ENCODE measurements at regions of chr9 and their contacts with region 1.

Region 1: DNA sequence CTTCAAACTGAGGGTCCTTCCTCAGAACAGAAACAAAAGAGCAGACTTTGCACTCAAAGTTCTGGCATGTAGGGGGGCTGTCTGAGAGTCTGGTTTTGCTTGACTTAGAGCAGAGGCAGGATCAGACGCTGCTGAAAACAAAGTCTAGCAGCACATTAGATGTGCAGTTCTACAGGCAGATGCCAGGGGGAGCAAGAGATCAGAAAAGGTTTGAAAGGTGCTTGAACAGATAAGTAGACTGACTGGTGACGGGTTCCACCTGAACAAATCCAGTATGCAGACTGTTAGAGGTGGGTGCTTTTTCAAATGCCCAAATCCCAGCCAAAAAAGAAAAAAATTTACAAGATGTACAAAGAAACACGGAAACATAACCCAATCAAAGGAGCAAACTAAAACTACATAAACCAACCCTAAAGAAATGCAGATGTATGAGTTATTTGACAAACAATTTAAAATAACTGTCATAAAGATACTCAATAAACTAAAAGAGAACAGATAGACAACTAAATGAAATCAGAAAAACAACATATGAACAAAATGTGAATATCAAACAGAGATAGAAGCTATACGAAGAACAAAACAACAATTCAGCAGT is 194.7 kb upstream of the FREM1 start:
- DNase-seq: peak; percentile 57
- H3K4me3 Mint-ChIP-seq: no peak overlapping the region
- H3K27ac Mint-ChIP-seq: no peak overlapping the region
- H3K4me1 Mint-ChIP-seq: peaks cover 6% of the 10 kb centered on the region
- H3K27me3 Mint-ChIP-seq: peaks cover 43% of the 10 kb centered on the region
- CTCF ChIP-seq: peak; percentile 82

Region 2: GRCh38 chr9:14341437-14342122 is 763.3 kb before region 1 on chr9:
- CTCF ChIA-PET with region 1: no interaction called
- POLR2A ChIA-PET with region 1: no interaction called
- intact Hi-C with region 1: no loop called
- DNase-seq: no peak
- H3K4me3 Mint-ChIP-seq: no peak overlapping the region
- H3K27ac Mint-ChIP-seq: no peak overlapping the region
- H3K4me1 Mint-ChIP-seq: no peaks in the 10 kb centered on the region
- H3K27me3 Mint-ChIP-seq: no peaks in the 10 kb centered on the region
- CTCF ChIP-seq: no peak

Region 3: DNA sequence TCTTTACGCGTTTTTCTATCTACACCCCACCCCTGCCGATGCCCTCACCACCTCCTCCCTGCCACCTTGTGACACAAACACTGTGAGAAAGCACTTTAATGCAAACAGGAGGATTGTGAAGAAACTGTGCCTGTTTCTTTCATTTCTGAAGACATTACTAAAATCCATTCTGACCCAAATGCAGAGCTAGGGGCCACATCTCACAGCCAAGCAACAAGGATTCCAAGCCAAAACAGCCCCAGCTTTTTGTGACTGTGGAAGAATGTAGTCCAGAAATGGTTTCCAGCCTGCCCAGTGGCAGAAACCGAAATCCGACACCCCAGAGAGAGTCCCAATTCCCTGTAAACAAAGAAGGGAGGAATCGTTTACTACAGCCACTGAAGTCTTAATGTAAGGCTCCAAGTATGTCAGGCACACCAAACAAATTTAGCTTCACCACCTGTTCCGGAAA is 11.2 kb after region 1 on chr9:
- CTCF ChIA-PET with region 1: interaction called, 19 read pairs
- POLR2A ChIA-PET with region 1: interaction called, 3 read pairs
- intact Hi-C with region 1: no loop called
- DNase-seq: no peak
- H3K4me3 Mint-ChIP-seq: no peak overlapping the region
- H3K27ac Mint-ChIP-seq: no peak overlapping the region
- H3K4me1 Mint-ChIP-seq: no peaks in the 10 kb centered on the region
- H3K27me3 Mint-ChIP-seq: peaks cover 67% of the 10 kb centered on the region
- CTCF ChIP-seq: no peak

Region 4: DNA sequence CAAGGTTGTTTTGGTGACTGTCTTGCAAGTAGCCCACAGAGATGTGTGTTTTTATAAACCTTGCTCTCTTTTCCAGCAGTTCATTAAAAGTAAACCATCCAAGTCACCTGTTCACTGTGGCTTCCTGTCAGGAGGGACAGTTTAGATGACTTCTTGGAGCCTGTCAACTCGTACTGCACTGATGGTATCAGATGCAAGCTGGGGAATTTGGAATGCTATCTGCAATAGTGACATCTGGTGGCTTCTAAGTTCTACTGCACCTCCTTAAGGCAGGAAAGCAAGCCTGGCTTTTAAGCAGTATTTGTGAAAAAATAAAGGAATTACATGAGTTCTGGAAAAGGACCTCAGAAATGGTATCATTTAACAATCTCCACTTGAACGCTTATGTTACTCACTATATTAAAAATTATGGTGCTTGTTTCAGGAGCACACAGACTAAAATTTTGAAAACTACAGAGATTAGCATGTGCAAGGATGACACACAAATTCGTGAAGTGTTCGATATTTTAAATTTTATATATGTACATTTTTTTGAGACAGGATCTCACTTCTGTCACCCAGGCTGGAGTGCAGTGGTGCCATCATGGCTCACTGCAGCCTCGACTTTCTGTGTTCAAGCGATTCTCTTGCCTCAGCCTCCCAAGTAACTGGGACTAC is 38.1 kb after region 1 on chr9:
- CTCF ChIA-PET with region 1: interaction called, 12 read pairs
- POLR2A ChIA-PET with region 1: interaction called, 3 read pairs
- intact Hi-C with region 1: no loop called
- DNase-seq: peak; percentile 59
- H3K4me3 Mint-ChIP-seq: no peak overlapping the region
- H3K27ac Mint-ChIP-seq: no peak overlapping the region
- H3K4me1 Mint-ChIP-seq: peaks cover 15% of the 10 kb centered on the region
- H3K27me3 Mint-ChIP-seq: no peaks in the 10 kb centered on the region
- CTCF ChIP-seq: peak; percentile 66

Region 5: DNA sequence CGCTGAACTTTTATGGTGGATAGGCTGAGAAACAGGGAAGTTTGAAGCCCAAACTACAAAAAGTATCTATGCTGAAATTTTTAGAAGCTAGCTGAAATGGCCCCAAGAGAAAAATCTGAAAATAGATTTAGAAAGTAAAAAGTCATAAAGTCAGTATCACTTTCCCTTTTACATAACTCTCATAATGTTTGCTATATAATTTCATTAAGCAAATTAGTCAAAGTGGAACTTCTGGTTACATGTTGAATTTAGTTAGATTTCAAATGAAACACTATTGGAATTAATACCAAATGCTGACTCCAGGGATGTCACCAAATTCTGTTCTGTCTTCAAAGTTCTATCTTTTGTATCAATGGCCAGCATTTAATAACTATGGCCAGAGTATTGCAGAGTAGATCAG is 75.2 kb after region 1 on chr9:
- CTCF ChIA-PET with region 1: no interaction called
- POLR2A ChIA-PET with region 1: no interaction called
- intact Hi-C with region 1: no loop called
- DNase-seq: no peak
- H3K4me3 Mint-ChIP-seq: no peak overlapping the region
- H3K27ac Mint-ChIP-seq: no peak overlapping the region
- H3K4me1 Mint-ChIP-seq: no peaks in the 10 kb centered on the region
- H3K27me3 Mint-ChIP-seq: no peaks in the 10 kb centered on the region
- CTCF ChIP-seq: no peak

Measured in MCF 10A (cell line).